H1 (cell line): ENCODE measurements at regions of chr6 and their contacts with region 1.

Region 1: GRCh38 chr6:30883685-30884520 is at the start of gene DDR1:
- DNase-seq: peak in 1 of 2 experiments; percentile 76
- H3K4me3 ChIP-seq: peak within 1 kb of the TSS; percentile 57 to 86 (median 80)
- H3K27ac ChIP-seq: peak within 1 kb of the TSS; percentile 86
- H3K4me1 ChIP-seq: peaks cover 12 to 52% (median 37%) of the 10 kb centered on the region in 4 experiments
- H3K27me3 ChIP-seq: no peaks in the 10 kb centered on the region
- CTCF ChIP-seq: no peak
- EP300 ChIP-seq: no peak
- POLR2A ChIP-seq: no peak
- RAD21 ChIP-seq: no peak
- total RNA-seq, gene DDR1: 181 and 182 TPM in 2 replicates

Region 2: GRCh38 chr6:30742316-30743098 is 141.4 kb before region 1 on chr6 and contains the start of gene FLOT1:
- CTCF ChIA-PET with region 1: interaction called, 3 read pairs
- POLR2A ChIA-PET with region 1: interaction called, 34 read pairs
- DNase-seq: peak; percentile 87 to 97
- H3K4me3 ChIP-seq: peak within 1 kb of the TSS; percentile 76 to 95 (median 88)
- H3K27ac ChIP-seq: peak within 1 kb of the TSS; percentile 54; the same call in 1 of the 2 replicates
- H3K4me1 ChIP-seq: peaks cover 3 to 18% (median 7%) of the 10 kb centered on the region in 4 experiments; a peak in 6 of 7 replicates
- H3K27me3 ChIP-seq: no peaks in the 10 kb centered on the region; a peak in 1 of 7 replicates
- CTCF ChIP-seq: no peak
- EP300 ChIP-seq: no peak
- POLR2A ChIP-seq: peak; percentile 24 to 47
- RAD21 ChIP-seq: peak; percentile 2 to 4; a peak in 2 of 4 replicates
- total RNA-seq, gene FLOT1: 85.4 and 87.5 TPM in 2 replicates

Region 3: DNA sequence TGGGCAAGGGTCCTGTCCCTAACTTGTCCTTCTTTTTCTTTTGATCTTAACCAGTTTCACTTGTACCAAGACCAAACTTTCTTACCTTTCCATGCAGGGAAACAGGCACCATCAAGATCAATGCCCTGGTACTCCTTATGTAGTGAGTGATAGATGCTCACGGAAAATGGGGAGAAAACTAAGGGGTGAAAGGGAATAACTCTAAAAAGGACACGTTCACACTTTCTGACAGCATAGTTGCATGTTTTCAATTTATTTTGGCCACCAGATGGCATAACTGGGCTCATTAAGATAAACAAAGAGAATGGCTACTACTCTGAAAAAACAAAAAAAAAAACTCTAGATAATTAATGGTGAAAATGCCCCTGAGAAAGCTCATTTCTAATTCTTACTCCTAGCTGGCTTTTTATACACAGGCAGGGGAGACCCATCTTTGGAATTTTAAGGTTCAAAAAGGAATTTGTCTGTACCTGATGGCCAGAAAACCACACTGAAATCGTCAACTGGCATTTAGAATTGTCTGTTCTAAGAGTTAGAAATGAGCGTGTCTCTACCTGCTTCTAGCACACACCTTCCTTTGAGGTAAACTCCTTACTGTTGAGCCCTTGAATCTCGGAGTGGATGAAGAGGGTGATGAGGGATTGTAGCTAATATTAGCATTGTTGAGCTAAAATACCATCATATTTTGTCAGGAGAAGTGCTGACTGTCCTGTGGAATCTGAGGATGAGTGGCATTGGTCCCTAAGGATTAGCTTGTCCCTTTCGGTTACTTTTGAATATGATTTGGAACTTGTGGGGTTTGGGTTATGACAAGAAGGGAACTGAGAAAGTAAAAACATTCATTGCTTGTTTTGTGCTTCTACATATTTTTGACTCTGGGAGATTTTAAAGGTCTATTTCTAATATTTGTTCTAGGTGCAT is 61.8 kb before region 1 on chr6:
- CTCF ChIA-PET with region 1: interaction called, 610 read pairs
- POLR2A ChIA-PET with region 1: interaction called, 452 read pairs
- DNase-seq: no peak
- H3K4me3 ChIP-seq: no peak overlapping the region
- H3K27ac ChIP-seq: no peak overlapping the region
- H3K4me1 ChIP-seq: peaks cover 0 to 3% (median 0%) of the 10 kb centered on the region in 4 experiments; a peak in 1 of 7 replicates
- H3K27me3 ChIP-seq: no peaks in the 10 kb centered on the region
- CTCF ChIP-seq: peak in 2 of 3 experiments; percentile 28 to 30; a peak in 2 of 4 replicates
- EP300 ChIP-seq: no peak
- POLR2A ChIP-seq: no peak
- RAD21 ChIP-seq: peak; percentile 27 to 42; a peak in 3 of 4 replicates

Region 4: DNA sequence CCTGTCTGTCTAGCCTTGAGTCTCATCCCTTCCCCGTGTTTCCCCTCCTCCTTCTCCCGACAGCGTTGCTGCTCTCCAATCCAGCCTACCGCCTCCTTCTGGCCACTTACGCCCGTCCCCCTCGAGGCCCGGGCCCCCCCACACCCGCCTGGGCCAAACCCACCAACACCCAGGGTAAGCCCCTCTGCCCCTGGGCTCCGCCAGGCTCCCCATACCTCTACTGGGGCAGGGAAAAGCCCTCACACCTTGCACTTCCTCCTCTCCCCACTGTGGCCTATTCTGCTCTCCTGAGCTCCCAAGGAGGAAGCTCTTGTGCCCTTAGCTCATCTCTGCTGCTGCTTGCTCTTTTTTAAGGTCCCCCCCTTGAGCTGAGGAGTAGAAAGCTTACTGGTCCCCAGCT is 11.4 kb after region 1 on chr6:
- CTCF ChIA-PET with region 1: interaction called, 19 read pairs
- POLR2A ChIA-PET with region 1: interaction called, 22 read pairs
- DNase-seq: no peak
- H3K4me3 ChIP-seq: no peak overlapping the region
- H3K27ac ChIP-seq: no peak overlapping the region
- H3K4me1 ChIP-seq: peaks cover 0 to 7% (median 1%) of the 10 kb centered on the region in 4 experiments; a peak in 3 of 7 replicates
- H3K27me3 ChIP-seq: no peaks in the 10 kb centered on the region
- CTCF ChIP-seq: no peak
- EP300 ChIP-seq: no peak
- POLR2A ChIP-seq: no peak
- RAD21 ChIP-seq: no peak

Region 5: GRCh38 chr6:30907758-30908591 is 24.1 kb after region 1 on chr6 and contains the start of gene GTF2H4:
- CTCF ChIA-PET with region 1: interaction called, 35 read pairs
- POLR2A ChIA-PET with region 1: interaction called, 6 read pairs
- DNase-seq: peak; percentile 93 to 95
- H3K4me3 ChIP-seq: peak within 1 kb of the TSS; percentile 83 to 98 (median 98)
- H3K27ac ChIP-seq: no peak within 1 kb of the TSS
- H3K4me1 ChIP-seq: peaks cover 0 to 4% (median 2%) of the 10 kb centered on the region in 4 experiments; a peak in 4 of 7 replicates
- H3K27me3 ChIP-seq: no peaks in the 10 kb centered on the region
- CTCF ChIP-seq: no peak
- EP300 ChIP-seq: no peak
- POLR2A ChIP-seq: peak in 1 of 2 experiments; percentile 63; a peak in 2 of 3 replicates
- RAD21 ChIP-seq: no peak
- total RNA-seq, gene GTF2H4: 49.5 and 53.4 TPM in 2 replicates

Region 6: DNA sequence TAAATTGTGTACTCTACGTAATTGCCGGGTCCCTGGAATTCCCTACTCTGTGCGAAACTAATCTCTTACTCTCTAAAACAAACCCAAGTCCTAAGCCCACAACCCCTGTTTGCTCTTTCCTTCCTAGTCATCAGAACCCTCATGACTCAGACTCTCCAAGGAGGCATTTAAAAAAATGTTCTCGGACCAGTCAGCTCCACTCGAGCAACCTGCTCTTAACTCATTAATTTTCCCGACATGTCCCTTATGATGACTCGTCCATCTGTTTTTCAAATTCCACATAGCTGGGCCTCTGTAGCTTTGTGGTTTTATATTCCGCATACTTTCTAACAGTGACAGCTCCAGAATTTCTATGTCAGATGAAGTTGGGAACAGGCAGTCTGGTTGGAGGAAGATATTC is 123.8 kb after region 1 on chr6:
- CTCF ChIA-PET with region 1: no interaction called
- POLR2A ChIA-PET with region 1: no interaction called
- DNase-seq: no peak
- H3K4me3 ChIP-seq: no peak overlapping the region
- H3K27ac ChIP-seq: no peak overlapping the region
- H3K4me1 ChIP-seq: no peaks in the 10 kb centered on the region
- H3K27me3 ChIP-seq: no peaks in the 10 kb centered on the region
- CTCF ChIP-seq: no peak
- EP300 ChIP-seq: no peak
- POLR2A ChIP-seq: no peak
- RAD21 ChIP-seq: no peak

Region 7: GRCh38 chr6:31087494-31088089 is 203.7 kb after region 1 on chr6:
- CTCF ChIA-PET with region 1: interaction called, 11 read pairs
- POLR2A ChIA-PET with region 1: interaction called, 3 read pairs
- DNase-seq: peak in 1 of 2 experiments; percentile 87
- H3K4me3 ChIP-seq: no peak overlapping the region
- H3K27ac ChIP-seq: no peak overlapping the region
- H3K4me1 ChIP-seq: no peaks in the 10 kb centered on the region; a peak in 1 of 7 replicates
- H3K27me3 ChIP-seq: no peaks in the 10 kb centered on the region
- CTCF ChIP-seq: peak; percentile 47 to 70 (median 67)
- EP300 ChIP-seq: no peak
- POLR2A ChIP-seq: no peak
- RAD21 ChIP-seq: peak; percentile 81 to 83